Breast epithelium (tissue), 4 donors: ENCODE measurements at regions of chr2 and their contacts with region 1.

Region 1: DNA sequence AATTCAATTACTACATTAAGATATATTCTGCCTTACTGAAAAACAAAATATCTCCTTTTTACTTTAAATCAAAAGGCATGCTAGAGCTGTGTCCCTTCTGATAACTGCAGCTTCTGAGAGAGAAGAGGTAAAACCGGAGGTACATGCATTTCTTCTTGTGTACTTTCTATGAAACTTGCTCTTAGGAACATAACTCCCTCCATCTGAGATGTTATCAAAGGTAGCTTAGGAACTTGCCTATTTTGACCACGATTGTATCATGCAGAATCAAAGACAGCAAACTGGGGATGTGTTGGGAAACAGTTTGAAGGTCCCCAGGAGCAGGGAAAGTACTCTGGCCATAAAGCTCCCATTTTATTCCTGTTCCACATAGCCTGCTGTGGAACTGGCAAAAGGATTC is 213.7 kb upstream of the MEIS1 start:
- DNase-seq: no peak
- H3K4me3 ChIP-seq: no peak overlapping the region
- H3K27ac ChIP-seq: no peak overlapping the region
- H3K4me1 ChIP-seq: no peaks in the 10 kb centered on the region
- H3K27me3 ChIP-seq: peaks cover 0 to 4% of the 10 kb centered on the region in 2 donors
- CTCF ChIP-seq: no peak
- POLR2A ChIP-seq: no peak

Region 2: GRCh38 chr2:65710779-65711295 is 510.3 kb before region 1 on chr2:
- intact Hi-C with region 1: loop called (anchors 5 kb)
- DNase-seq: no peak
- H3K4me3 ChIP-seq: no peak overlapping the region
- H3K27ac ChIP-seq: no peak overlapping the region
- H3K4me1 ChIP-seq: no peaks in the 10 kb centered on the region
- H3K27me3 ChIP-seq: no peaks in the 10 kb centered on the region
- CTCF ChIP-seq: no peak
- POLR2A ChIP-seq: no peak

Region 3: DNA sequence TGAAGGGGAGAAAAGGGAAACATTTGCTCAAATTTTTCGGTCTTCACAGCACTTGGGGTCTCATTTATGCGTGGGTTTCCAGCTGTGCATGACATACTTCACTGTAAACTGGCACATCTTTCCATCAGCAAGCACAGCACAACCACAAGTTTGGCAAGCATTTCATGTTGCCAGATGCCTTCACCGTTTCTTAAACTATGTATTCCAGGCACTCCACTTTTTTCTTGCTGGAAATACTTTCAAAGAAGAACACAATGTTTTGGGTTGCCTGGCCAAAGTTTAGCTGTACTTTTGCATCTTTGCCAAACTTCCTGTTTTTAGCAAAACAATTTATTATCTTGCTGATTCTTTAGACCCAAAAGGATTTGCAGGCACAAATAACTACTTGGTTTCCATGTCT is 19.1 kb after region 1 on chr2:
- intact Hi-C with region 1: no loop called
- DNase-seq: peak in 1 of 2 donors; percentile 44
- H3K4me3 ChIP-seq: peak overlapping the region in 1 of 3 donors; percentile 9
- H3K27ac ChIP-seq: peak overlapping the region; percentile 18 to 22
- H3K4me1 ChIP-seq: peaks cover 0 to 11% of the 10 kb centered on the region in 2 donors
- H3K27me3 ChIP-seq: no peaks in the 10 kb centered on the region
- CTCF ChIP-seq: no peak
- POLR2A ChIP-seq: no peak

Region 4: DNA sequence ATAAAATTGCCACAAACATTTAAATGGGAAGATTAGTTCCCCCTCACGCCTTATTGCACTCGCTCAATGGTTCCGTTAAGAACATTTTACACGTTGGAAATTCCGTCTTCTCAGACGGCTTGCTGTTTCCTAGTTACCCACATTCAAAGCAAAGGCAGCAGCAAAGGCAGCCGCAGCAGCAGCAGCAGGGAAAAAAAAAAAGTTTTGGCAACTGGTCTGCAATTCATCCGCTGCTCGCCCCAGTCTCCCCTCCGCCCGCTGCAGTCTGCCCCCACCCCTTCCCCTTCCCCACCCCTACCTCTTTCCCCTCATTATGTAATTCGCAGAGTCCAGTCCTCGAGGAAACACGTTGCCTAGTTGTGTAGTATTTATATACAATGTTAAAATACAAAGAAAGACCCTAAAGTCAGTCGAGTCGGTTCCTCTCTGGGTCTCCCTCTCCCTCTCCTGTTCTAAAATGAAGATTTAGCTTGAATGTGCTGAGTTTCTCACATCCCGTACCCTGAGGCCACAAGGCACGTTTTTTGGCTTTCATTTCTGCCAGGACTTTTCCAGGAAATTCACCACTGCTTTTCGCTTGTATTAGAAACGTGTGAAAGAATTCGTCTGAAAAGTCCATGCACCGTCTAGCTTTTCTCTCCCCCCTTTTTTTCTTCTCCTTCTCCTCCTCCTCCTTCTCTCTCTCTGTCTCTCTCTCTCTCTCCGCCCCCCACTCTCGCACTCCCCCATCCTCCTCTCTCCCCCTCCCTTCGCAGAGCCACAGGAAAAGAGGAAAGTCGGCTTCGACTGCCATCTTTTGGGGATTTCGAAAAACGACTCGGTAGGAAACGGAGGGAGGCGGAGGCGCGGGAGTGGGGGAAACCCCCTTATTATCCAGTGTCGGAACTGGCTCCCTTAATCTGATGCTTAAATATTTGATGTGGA is 353.8 kb after region 1 on chr2:
- intact Hi-C with region 1: no loop called
- DNase-seq: no peak
- H3K4me3 ChIP-seq: peak overlapping the region; percentile 55 to 72 (median 59)
- H3K27ac ChIP-seq: peak overlapping the region; percentile 68 to 69
- H3K4me1 ChIP-seq: peaks cover 0 to 10% of the 10 kb centered on the region in 2 donors
- H3K27me3 ChIP-seq: peaks cover 0 to 45% of the 10 kb centered on the region in 2 donors
- CTCF ChIP-seq: peak in 2 of 3 donors; percentile 14 to 35
- POLR2A ChIP-seq: no peak